ENCODE measurements at regions of chr14 and their contacts with region 1.

Region 1: DNA sequence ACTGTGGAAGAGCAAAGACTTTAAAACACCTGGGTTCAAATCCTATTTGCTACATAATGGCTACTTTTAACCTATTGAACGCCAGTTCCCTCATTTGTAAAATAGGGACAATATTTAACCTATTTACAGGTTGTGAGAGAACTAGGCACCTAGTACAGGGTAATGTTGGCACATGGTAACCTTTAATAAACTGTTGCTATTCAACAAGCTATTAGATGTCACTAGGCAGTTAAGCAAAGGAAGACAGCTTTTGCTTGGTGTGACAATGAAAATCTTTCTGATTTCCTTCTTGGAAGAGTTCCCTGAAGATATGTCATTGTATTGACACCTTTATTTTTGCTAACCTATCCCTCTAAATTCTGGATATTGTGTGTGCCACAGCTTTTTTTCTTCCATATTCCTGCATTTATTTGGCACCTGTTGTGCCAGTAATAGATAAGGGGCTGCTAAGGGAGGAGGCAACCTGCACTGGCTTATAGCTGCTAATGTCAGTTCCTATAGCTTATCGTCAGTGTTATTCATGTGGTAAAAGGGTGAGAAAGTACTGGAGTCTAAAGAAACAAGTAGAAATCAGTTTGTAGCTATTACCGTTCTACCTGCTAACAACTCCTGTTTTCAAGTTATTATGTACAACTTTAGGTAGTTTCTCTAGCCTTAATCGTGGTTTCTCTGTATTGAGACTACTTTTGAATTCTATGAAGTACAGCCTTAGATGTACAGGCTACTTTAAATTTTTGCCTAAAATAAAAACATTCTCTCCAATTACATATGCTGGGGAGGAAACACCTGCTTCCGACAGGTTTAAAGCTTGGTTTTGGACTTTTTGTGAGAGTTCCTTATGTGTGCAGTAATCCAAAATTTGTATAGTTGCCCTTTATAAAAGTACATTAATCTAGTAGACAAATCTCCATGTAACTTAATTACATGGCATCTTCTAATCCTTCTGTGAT is 24.3 kb downstream of the HIF1A start:
- DNase-seq: no peak
- ATAC-seq: peak; percentile 52
- H3K4me3 Mint-ChIP-seq: peak overlapping the region; percentile 41
- H3K27ac Mint-ChIP-seq: peak overlapping the region; percentile 81
- H3K4me1 Mint-ChIP-seq: peaks cover 83% of the 10 kb centered on the region
- H3K27me3 Mint-ChIP-seq: no peaks in the 10 kb centered on the region

Region 2: GRCh38 chr14:61703342-61704129 is 16.1 kb before region 1 on chr14:
- CTCF ChIA-PET with region 1: interaction called, 11 read pairs
- POLR2A ChIA-PET with region 1: no interaction called
- intact Hi-C with region 1: loop called in 1 of 2 experiments (anchors 2 kb)
- DNase-seq: no peak
- ATAC-seq: peak; percentile 66
- H3K4me3 Mint-ChIP-seq: peak overlapping the region; percentile 47
- H3K27ac Mint-ChIP-seq: peak overlapping the region; percentile 69
- H3K4me1 Mint-ChIP-seq: peaks cover 82% of the 10 kb centered on the region
- H3K27me3 Mint-ChIP-seq: no peaks in the 10 kb centered on the region

Region 3: GRCh38 chr14:61737915-61738314 is 18.3 kb after region 1 on chr14:
- CTCF ChIA-PET with region 1: interaction called, 17 read pairs
- POLR2A ChIA-PET with region 1: interaction called, 8 read pairs
- intact Hi-C with region 1: loop called in 1 of 2 experiments (anchors 2 kb)
- DNase-seq: no peak
- ATAC-seq: no peak
- H3K4me3 Mint-ChIP-seq: no peak overlapping the region
- H3K27ac Mint-ChIP-seq: peak overlapping the region; percentile 34
- H3K4me1 Mint-ChIP-seq: peaks cover 12% of the 10 kb centered on the region
- H3K27me3 Mint-ChIP-seq: no peaks in the 10 kb centered on the region

Measured in activated CD4-positive, alpha-beta T cell treated with anti-CD3 and anti-CD28 coated beads for 36 hours (primary cell).